ENCODE measurements at regions of chr1 and their contacts with region 1.

Region 1: GRCh38 chr1:150186789-150187559 is 37.3 kb downstream of the PLEKHO1 start:
- DNase-seq: peak in 17 of 35 experiments; percentile 1 to 72 (median 13)
- ATAC-seq: peak; percentile 75 to 88 (median 77)
- H3K4me3 ChIP-seq: no peak overlapping the region
- H3K4me3 Mint-ChIP-seq: peak overlapping the region in 1 of 3 donors; percentile 17
- H3K27ac ChIP-seq: no peak overlapping the region
- H3K27ac Mint-ChIP-seq: peak overlapping the region in 1 of 2 donors; percentile 23
- H3K4me1 ChIP-seq: peaks cover 2 to 13% of the 10 kb centered on the region in 2 experiments
- H3K4me1 Mint-ChIP-seq: peaks cover 0 to 11% (median 9%) of the 10 kb centered on the region in 3 donors
- H3K27me3 ChIP-seq: peaks cover 0 to 3% of the 10 kb centered on the region in 2 experiments
- H3K27me3 Mint-ChIP-seq: peaks cover 0 to 3% of the 10 kb centered on the region in 2 donors

Region 2: DNA sequence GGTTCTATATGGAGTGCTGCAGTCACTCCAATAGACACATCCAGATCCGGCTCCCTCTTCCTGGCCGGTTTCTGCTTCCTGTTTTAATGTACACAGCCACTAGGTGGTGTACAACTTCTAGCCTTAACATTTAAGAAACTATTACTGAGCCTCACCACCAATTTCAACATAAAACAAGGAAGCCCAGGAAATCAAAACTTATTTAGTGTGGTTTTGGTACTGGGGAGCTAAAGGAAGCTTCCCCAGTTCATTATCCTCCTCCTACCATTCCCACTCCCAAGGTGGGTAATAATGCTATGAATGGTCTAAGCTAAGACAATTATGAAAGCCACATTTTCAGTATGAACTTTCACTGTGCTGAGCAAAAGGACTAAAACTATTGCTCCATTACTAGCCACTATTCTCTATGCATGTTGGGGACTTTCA is 224.8 kb before region 1 on chr1:
- CTCF ChIA-PET with region 1: interaction called, 16 to 40 read pairs
- POLR2A ChIA-PET with region 1: no interaction called
- DNase-seq: peak in 32 of 35 experiments; percentile 5 to 78 (median 19)
- ATAC-seq: peak; percentile 77 to 82 (median 78)
- H3K4me3 ChIP-seq: no peak overlapping the region
- H3K4me3 Mint-ChIP-seq: no peak overlapping the region
- H3K27ac ChIP-seq: no peak overlapping the region
- H3K27ac Mint-ChIP-seq: no peak overlapping the region
- H3K4me1 ChIP-seq: peaks cover 3 to 4% of the 10 kb centered on the region in 2 experiments
- H3K4me1 Mint-ChIP-seq: peaks cover 14 to 22% (median 21%) of the 10 kb centered on the region in 3 donors
- H3K27me3 ChIP-seq: no peaks in the 10 kb centered on the region
- H3K27me3 Mint-ChIP-seq: no peaks in the 10 kb centered on the region

Region 3: DNA sequence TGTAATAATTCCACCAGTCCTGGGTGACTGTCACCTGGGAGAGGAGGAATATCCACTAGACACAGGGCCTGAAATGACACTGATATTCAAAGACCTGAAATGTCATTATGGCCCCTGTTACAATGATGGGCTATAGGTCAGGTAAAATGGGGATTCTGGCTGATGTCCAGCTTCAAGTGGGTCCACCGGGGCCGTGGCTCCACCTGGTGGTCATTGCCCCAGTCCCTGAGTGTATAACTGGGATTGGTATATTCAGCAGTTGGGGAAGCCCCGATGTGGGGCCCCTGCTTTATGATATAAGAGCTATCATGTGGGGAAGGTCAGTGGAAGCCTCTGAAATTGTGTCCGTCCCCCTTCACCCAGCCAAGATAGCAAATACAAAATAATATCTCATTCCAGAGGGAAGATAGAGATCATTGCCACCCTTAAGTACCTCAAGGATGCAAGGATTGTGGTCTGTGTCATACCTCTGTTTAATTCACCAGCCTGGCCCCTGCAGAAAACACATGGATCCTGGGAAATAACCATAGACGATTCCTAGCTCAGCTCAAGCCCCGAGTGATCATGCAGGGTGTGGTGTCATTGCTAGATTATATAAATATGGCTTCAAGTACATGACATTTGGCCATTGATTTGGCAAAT is 17.9 kb before region 1 on chr1:
- CTCF ChIA-PET with region 1: interaction called, 3 to 12 read pairs
- POLR2A ChIA-PET with region 1: no interaction called
- DNase-seq: peak in 22 of 35 experiments; percentile 19 to 67 (median 40)
- ATAC-seq: peak in 3 of 4 experiments; percentile 43 to 61 (median 46)
- H3K4me3 ChIP-seq: no peak overlapping the region
- H3K4me3 Mint-ChIP-seq: no peak overlapping the region
- H3K27ac ChIP-seq: no peak overlapping the region
- H3K27ac Mint-ChIP-seq: no peak overlapping the region
- H3K4me1 ChIP-seq: no peaks in the 10 kb centered on the region
- H3K4me1 Mint-ChIP-seq: peaks cover 4 to 20% (median 14%) of the 10 kb centered on the region in 3 donors
- H3K27me3 ChIP-seq: peaks cover 0 to 3% of the 10 kb centered on the region in 2 experiments
- H3K27me3 Mint-ChIP-seq: peaks cover 1 to 4% of the 10 kb centered on the region in 2 donors